Naive thymus-derived CD8-positive, alpha-beta T cell (primary cell): ENCODE measurements at regions of chr6 and their contacts with region 1.

Region 1: DNA sequence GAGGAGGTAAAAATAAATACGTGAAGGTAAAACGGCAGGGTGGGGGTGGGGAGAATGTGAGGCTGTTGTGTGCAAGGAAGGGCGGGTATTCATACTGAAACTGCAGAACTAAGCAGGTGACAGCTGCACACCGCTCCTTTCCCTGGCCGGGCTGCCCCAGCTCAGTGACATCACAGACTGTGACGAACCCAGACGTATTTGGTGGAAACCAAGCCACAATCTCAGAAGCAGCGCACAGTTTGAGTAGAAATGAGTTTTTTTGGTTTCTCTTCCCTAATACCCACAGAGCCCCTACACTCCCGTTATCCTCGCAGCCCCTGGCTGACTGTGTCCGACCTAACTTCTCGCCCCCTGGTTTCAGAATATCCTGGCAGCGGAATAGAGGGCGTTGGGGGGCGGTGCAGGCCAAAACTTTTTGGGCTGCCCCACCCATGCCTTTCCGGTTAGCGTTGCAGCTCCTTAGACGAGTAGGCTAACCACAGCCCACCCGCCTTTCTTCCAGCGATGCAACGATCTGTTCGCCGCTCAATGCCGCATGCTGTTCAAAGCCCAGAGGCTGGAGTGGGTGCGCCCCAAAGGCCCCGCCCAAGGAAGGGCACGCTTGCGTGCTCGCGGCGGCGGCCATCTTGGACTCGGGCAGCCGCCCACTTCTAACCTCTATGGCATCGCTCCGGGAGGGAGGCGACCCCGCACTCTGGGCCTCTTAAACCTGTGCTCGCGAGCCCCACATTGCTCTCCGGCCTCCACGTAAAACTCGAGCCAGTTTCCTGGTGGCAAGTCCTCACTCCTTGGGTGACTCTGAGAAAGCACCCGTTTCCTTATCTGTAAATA is 9.1 kb downstream of the BAK1 start:
- DNase-seq: peak; percentile 82 to 97 (median 96)
- ATAC-seq: peak; percentile 89 to 91
- H3K4me3 Mint-ChIP-seq: peak overlapping the region; percentile 84 to 97 (median 96)
- H3K27ac Mint-ChIP-seq: peak overlapping the region; percentile 99 to 100 (median 100)
- H3K4me1 Mint-ChIP-seq: peaks cover 16 to 35% (median 29%) of the 10 kb centered on the region in 4 donors
- H3K27me3 Mint-ChIP-seq: no peaks in the 10 kb centered on the region

Region 2: GRCh38 chr6:32668226-32668747 is 902.7 kb before region 1 on chr6:
- POLR2A ChIA-PET with region 1: no interaction called
- DNase-seq: peak in 9 of 10 donors; percentile 19 to 78 (median 59)
- ATAC-seq: peak; percentile 74 to 81
- H3K4me3 Mint-ChIP-seq: peak overlapping the region in 4 of 10 donors; percentile 15 to 53 (median 28)
- H3K27ac Mint-ChIP-seq: peak overlapping the region in 6 of 10 donors; percentile 43 to 81 (median 78)
- H3K4me1 Mint-ChIP-seq: peaks cover 24 to 63% (median 33%) of the 10 kb centered on the region in 4 donors
- H3K27me3 Mint-ChIP-seq: peaks cover 5 to 29% (median 21%) of the 10 kb centered on the region in 5 donors

Region 3: DNA sequence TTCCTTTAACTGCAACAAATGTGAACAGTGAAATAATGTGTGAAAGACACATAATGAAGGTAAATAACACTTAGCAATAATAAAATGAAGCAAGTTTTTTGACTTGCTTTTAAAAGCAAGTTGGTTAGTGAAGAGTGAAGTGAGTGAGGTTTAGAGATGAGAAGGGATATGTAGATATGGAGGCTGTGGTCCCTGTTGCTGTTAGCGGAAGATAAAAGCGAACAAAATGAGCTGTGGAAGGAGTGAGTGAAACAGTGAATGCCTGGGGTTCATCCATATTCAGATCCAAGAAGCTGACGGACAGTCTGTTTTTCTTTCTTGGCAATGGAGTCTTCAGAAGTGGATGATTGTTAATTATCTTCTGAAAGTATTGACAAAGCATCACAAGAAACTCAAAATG is 93.2 kb before region 1 on chr6:
- POLR2A ChIA-PET with region 1: no interaction called
- DNase-seq: no peak
- ATAC-seq: no peak
- H3K4me3 Mint-ChIP-seq: no peak overlapping the region
- H3K27ac Mint-ChIP-seq: peak overlapping the region in 1 of 10 donors; percentile 3
- H3K4me1 Mint-ChIP-seq: no peaks in the 10 kb centered on the region
- H3K27me3 Mint-ChIP-seq: no peaks in the 10 kb centered on the region

Region 4: DNA sequence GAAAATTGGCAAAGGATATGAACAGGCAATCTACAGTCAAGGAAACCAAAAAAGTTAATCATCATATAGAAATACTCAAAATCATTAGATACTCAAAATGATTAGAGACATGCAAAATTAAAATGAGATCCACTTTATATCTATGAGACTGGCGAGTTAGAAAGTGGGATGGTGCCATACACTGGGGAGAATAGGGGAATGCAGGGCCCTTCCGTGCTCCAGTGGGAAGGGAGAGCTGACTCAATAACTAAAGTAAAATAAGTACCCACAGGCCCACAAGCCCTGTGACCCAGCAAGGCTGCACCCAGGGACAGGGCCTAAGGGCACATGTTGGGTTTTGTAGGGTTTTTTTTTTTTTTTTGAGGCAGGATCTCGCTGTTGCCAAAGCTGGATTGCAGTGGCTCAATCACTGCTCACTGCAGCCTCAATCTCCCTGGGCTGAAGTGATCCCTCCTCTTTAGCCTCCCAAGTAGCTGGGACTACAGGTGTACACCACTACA is 35.9 kb before region 1 on chr6:
- POLR2A ChIA-PET with region 1: interaction called, 22 read pairs
- DNase-seq: no peak
- ATAC-seq: no peak
- H3K4me3 Mint-ChIP-seq: no peak overlapping the region
- H3K27ac Mint-ChIP-seq: peak overlapping the region in 2 of 10 donors; percentile 13 to 55
- H3K4me1 Mint-ChIP-seq: peaks cover 15 to 30% (median 23%) of the 10 kb centered on the region in 4 donors
- H3K27me3 Mint-ChIP-seq: no peaks in the 10 kb centered on the region